ENCODE measurements at regions of chrX and their contacts with region 1.

Region 1: GRCh38 chrX:15761564-15762191 is 23.6 kb downstream of the CA5B start:
- DNase-seq: no peak
- ATAC-seq: peak; percentile 37
- H3K4me3 Mint-ChIP-seq: no peak overlapping the region
- H3K27ac Mint-ChIP-seq: peak overlapping the region; percentile 50
- H3K4me1 Mint-ChIP-seq: peaks cover 10% of the 10 kb centered on the region
- H3K27me3 Mint-ChIP-seq: no peaks in the 10 kb centered on the region
- CTCF ChIP-seq: no peak

Region 2: DNA sequence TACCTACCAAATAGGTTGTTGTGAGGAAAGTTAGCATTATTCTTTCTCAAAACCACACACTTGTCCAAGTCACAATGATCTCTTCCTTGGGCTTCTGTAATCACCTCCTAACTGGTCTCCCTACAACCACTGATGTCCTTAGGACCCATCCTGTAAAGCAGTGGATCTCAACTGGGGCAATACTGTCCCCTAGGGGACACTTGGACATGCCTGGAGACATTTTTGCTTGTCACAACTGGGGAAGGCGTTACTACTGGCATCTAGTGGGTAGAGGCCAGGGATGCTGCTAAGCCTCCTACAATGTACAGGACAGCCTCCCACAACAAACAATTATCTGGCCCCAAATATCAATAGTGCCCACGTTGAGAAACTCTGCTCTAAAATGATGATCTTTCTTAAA is 211.6 kb after region 1 on chrX:
- CTCF ChIA-PET with region 1: no interaction called
- POLR2A ChIA-PET with region 1: no interaction called
- intact Hi-C with region 1: loop called (anchors 1 kb)
- DNase-seq: no peak
- ATAC-seq: peak; percentile 76
- H3K4me3 Mint-ChIP-seq: no peak overlapping the region
- H3K27ac Mint-ChIP-seq: no peak overlapping the region
- H3K4me1 Mint-ChIP-seq: peaks cover 24% of the 10 kb centered on the region
- H3K27me3 Mint-ChIP-seq: no peaks in the 10 kb centered on the region
- CTCF ChIP-seq: no peak

Region 3: DNA sequence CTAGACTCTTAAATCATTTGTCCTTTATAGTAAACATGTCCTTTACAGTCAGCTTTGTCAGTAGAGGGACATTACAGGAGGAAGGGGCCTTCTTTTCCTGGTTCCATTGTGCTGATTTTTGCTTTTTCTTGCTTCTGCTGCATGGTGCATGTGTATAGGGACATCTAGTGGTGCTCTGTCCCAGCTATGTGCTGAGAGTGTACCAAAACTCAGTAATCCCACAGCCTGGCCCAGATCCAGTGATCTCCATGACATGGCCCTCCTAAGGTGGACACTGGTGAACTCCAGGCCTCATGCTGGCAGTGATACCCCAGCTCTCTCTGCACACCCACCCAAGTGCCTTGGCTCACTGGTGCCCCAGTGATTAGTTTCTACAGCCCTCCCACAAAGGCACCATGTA is 450.8 kb after region 1 on chrX:
- CTCF ChIA-PET with region 1: no interaction called
- POLR2A ChIA-PET with region 1: no interaction called
- intact Hi-C with region 1: loop called (anchors 2 kb)
- DNase-seq: no peak
- ATAC-seq: no peak
- H3K4me3 Mint-ChIP-seq: no peak overlapping the region
- H3K27ac Mint-ChIP-seq: no peak overlapping the region
- H3K4me1 Mint-ChIP-seq: no peaks in the 10 kb centered on the region
- H3K27me3 Mint-ChIP-seq: no peaks in the 10 kb centered on the region
- CTCF ChIP-seq: no peak

Region 4: GRCh38 chrX:16654093-16654492 is 892.4 kb after region 1 on chrX:
- CTCF ChIA-PET with region 1: no interaction called
- POLR2A ChIA-PET with region 1: no interaction called
- intact Hi-C with region 1: no loop called
- DNase-seq: no peak
- ATAC-seq: no peak
- H3K4me3 Mint-ChIP-seq: no peak overlapping the region
- H3K27ac Mint-ChIP-seq: no peak overlapping the region
- H3K4me1 Mint-ChIP-seq: no peaks in the 10 kb centered on the region
- H3K27me3 Mint-ChIP-seq: no peaks in the 10 kb centered on the region
- CTCF ChIP-seq: no peak

Measured in activated B cell treated with CpG ODN at 0.5 μM for 24 hours (primary cell).